T-cell (primary cell): ENCODE measurements at regions of chr2 and their contacts with region 1.

Region 1: GRCh38 chr2:25168256-25169072 is at the start of gene POMC:
- DNase-seq: peak in 23 of 35 experiments; percentile 1 to 46 (median 22)
- ATAC-seq: peak; percentile 65 to 75 (median 72)
- H3K4me3 ChIP-seq: peak within 1 kb of the TSS; percentile 48 to 58
- H3K4me3 Mint-ChIP-seq: peak within 1 kb of the TSS; percentile 70 to 79 (median 73)
- H3K27ac ChIP-seq: no peak within 1 kb of the TSS
- H3K27ac Mint-ChIP-seq: no peak within 1 kb of the TSS
- H3K4me1 ChIP-seq: peaks cover 0 to 24% of the 10 kb centered on the region in 2 experiments
- H3K4me1 Mint-ChIP-seq: peaks cover 16 to 39% (median 21%) of the 10 kb centered on the region in 3 donors
- H3K27me3 ChIP-seq: peaks cover 17 to 40% of the 10 kb centered on the region in 2 experiments
- H3K27me3 Mint-ChIP-seq: peaks cover 25 to 55% of the 10 kb centered on the region in 2 donors
- total RNA-seq, gene POMC: 2.4 to 7.5 (median 4.8) TPM

Region 2: GRCh38 chr2:24382363-24383073 is 785.9 kb before region 1 on chr2:
- CTCF ChIA-PET with region 1: interaction called in 1 of 2 experiments, 10 read pairs
- POLR2A ChIA-PET with region 1: no interaction called
- DNase-seq: peak; percentile 8 to 82 (median 49)
- ATAC-seq: peak; percentile 79 to 91 (median 86)
- H3K4me3 ChIP-seq: no peak overlapping the region
- H3K4me3 Mint-ChIP-seq: no peak overlapping the region
- H3K27ac ChIP-seq: no peak overlapping the region
- H3K27ac Mint-ChIP-seq: no peak overlapping the region
- H3K4me1 ChIP-seq: peaks cover 0 to 2% of the 10 kb centered on the region in 2 experiments
- H3K4me1 Mint-ChIP-seq: no peaks in the 10 kb centered on the region
- H3K27me3 ChIP-seq: no peaks in the 10 kb centered on the region
- H3K27me3 Mint-ChIP-seq: no peaks in the 10 kb centered on the region

Region 3: DNA sequence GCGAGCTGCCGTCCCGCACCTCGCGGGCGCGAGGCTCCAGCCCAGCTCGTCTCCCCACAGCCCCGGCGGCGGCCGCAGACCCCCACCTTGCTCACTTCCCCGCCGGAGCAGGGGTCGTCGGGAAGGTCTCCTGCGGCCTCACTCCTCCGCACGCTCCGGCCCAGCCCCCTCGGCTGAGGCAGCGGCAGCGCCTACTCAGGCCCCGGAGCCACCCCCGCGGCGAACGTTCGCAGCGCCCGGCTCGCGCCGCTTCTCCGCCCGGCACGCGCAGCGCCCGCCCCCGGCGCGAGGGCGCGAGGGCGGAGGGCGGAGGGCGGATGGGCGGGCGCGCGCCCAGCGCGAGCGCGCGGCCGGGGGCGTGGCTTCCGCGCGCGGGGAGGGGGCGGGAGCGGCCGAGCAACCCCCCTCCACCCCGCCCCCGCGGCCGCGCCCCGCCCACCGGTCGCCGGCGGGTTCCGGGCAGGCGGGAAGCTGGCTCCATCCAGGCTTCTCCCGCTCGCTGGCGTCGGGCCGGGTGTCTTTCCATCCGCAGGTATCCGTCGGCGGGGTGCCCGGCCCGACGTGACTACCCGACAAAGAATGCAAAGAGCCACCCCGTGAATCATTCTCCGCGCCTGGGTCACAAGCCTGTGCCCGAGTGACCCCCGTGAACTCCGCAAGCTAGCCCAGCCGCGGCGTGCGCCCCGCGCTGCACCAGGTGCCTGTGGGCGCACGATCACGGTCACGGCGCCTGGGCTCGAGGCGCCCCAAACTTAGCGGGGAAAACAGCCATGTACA is 505.0 kb after region 1 on chr2 and contains the start of gene DTNB:
- CTCF ChIA-PET with region 1: no interaction called
- POLR2A ChIA-PET with region 1: no interaction called
- DNase-seq: peak; percentile 46 to 90 (median 70)
- ATAC-seq: peak; percentile 79 to 86 (median 85)
- H3K4me3 ChIP-seq: peak within 1 kb of the TSS; percentile 76 to 77
- H3K4me3 Mint-ChIP-seq: peak within 1 kb of the TSS; percentile 82 to 86 (median 85)
- H3K27ac ChIP-seq: peak within 1 kb of the TSS; percentile 35
- H3K27ac Mint-ChIP-seq: peak within 1 kb of the TSS; percentile 82 to 84
- H3K4me1 ChIP-seq: peaks cover 0 to 21% of the 10 kb centered on the region in 2 experiments
- H3K4me1 Mint-ChIP-seq: peaks cover 34 to 37% (median 36%) of the 10 kb centered on the region in 3 donors
- H3K27me3 ChIP-seq: no peaks in the 10 kb centered on the region
- H3K27me3 Mint-ChIP-seq: no peaks in the 10 kb centered on the region
- total RNA-seq, gene DTNB: 33.4 to 45.7 (median 39.6) TPM